Activated CD8-positive, alpha-beta T cell treated with anti-CD3 and anti-CD28 coated beads, Interleukin-2, amount 10 ng/mL, durations not matched to agents 7 days and 5 days (primary cell): ENCODE measurements at regions of chr12 and their contacts with region 1.

Region 1: GRCh38 chr12:112198120-112198733 is 72.9 kb downstream of the TRAFD1 start:
- DNase-seq: peak; percentile 72
- ATAC-seq: peak; percentile 93
- H3K4me3 Mint-ChIP-seq: no peak overlapping the region
- H3K27ac Mint-ChIP-seq: peak overlapping the region; percentile 19
- H3K4me1 Mint-ChIP-seq: no peaks in the 10 kb centered on the region
- H3K27me3 Mint-ChIP-seq: no peaks in the 10 kb centered on the region

Region 2: GRCh38 chr12:112409064-112409905 is 211.1 kb after region 1 on chr12 and contains the start of gene RPL6:
- CTCF ChIA-PET with region 1: interaction called, 13 read pairs
- POLR2A ChIA-PET with region 1: no interaction called
- DNase-seq: peak; percentile 88
- ATAC-seq: peak; percentile 85
- H3K4me3 Mint-ChIP-seq: peak within 1 kb of the TSS; percentile 99
- H3K27ac Mint-ChIP-seq: peak within 1 kb of the TSS; percentile 100
- H3K4me1 Mint-ChIP-seq: peaks cover 42% of the 10 kb centered on the region
- H3K27me3 Mint-ChIP-seq: no peaks in the 10 kb centered on the region
- total RNA-seq, gene RPL6: 1,104 to 1,130 TPM